Panc1 (cell line): ENCODE measurements at regions of chr1 and their contacts with region 1.

Region 1: GRCh38 chr1:85259118-85259911 is at the start of gene C1orf52:
- DNase-seq: peak; percentile 78
- ATAC-seq: peak; percentile 93
- H3K4me3 ChIP-seq: peak within 1 kb of the TSS; percentile 69 to 83
- H3K27ac ChIP-seq: peak within 1 kb of the TSS; percentile 86
- H3K4me1 ChIP-seq: peaks cover 21% of the 10 kb centered on the region
- H3K27me3 ChIP-seq: no peaks in the 10 kb centered on the region
- CTCF ChIP-seq: peak; percentile 100
- total RNA-seq, gene C1orf52: 51.6 TPM

Region 2: GRCh38 chr1:84944767-84945486 is 314.4 kb before region 1 on chr1:
- CTCF ChIA-PET with region 1: interaction called, 36 read pairs
- POLR2A ChIA-PET with region 1: interaction called, 3 read pairs
- in situ Hi-C with region 1: no loop called
- intact Hi-C with region 1: loop called (anchors 1 kb)
- DNase-seq: peak; percentile 94
- ATAC-seq: peak; percentile 96
- H3K4me3 ChIP-seq: peak overlapping the region; percentile 24 to 34
- H3K27ac ChIP-seq: peak overlapping the region; percentile 74
- H3K4me1 ChIP-seq: no peaks in the 10 kb centered on the region
- H3K27me3 ChIP-seq: no peaks in the 10 kb centered on the region
- CTCF ChIP-seq: peak; percentile 100

Region 3: DNA sequence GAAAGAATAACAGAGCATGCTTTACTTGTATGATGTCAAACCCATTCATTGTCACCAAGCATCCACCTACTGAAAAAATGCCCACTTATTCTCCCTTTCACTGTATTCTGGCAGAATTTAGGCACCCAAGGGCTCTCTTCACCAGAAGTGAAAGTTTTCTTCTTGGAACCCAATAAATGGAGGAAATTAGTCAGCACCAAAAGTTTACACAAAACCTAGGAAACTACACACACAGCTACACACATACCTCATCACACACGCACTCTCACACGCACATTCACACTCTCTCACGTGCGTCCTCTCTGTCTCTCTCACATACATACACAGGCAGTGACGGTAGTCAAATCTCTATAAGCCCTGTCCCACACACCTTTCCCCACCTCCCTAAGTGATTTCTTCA is 300.0 kb before region 1 on chr1:
- CTCF ChIA-PET with region 1: interaction called, 3 read pairs
- POLR2A ChIA-PET with region 1: interaction called, 10 read pairs
- in situ Hi-C with region 1: no loop called
- intact Hi-C with region 1: no loop called
- DNase-seq: no peak
- ATAC-seq: no peak
- H3K4me3 ChIP-seq: no peak overlapping the region
- H3K27ac ChIP-seq: no peak overlapping the region
- H3K4me1 ChIP-seq: no peaks in the 10 kb centered on the region
- H3K27me3 ChIP-seq: no peaks in the 10 kb centered on the region
- CTCF ChIP-seq: no peak

Region 4: DNA sequence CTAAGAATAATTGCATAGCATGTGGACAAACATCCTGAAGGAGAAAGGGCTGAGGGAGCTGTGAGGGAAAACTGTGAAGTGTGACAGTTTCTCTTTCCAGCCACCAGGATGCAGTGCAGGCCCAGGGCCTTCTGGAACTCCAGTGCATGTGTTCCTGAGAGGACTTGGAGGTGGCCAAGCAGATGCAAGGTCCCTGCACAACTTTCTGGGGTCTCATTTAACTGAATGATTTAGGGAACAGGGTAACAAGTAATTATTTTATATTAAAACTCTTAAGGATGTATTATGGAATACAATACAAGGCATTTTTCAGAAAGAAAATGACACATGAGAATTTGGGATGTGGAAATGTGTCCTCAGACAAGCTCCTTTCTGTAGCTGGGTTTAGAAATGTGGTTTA is 149.8 kb before region 1 on chr1:
- CTCF ChIA-PET with region 1: interaction called, 32 read pairs
- POLR2A ChIA-PET with region 1: no interaction called
- in situ Hi-C with region 1: no loop called
- intact Hi-C with region 1: loop called (anchors 1 kb)
- DNase-seq: peak; percentile 60
- ATAC-seq: peak; percentile 100
- H3K4me3 ChIP-seq: no peak overlapping the region
- H3K27ac ChIP-seq: no peak overlapping the region
- H3K4me1 ChIP-seq: no peaks in the 10 kb centered on the region
- H3K27me3 ChIP-seq: peaks cover 5% of the 10 kb centered on the region; the same call in 1 of the 2 replicates
- CTCF ChIP-seq: peak; percentile 100

Region 5: GRCh38 chr1:85200870-85201339 is 58.4 kb before region 1 on chr1 and contains the start of gene SYDE2:
- CTCF ChIA-PET with region 1: interaction called, 5 read pairs
- POLR2A ChIA-PET with region 1: interaction called, 4 read pairs
- in situ Hi-C with region 1: no loop called
- intact Hi-C with region 1: loop called (anchors 2 kb)
- DNase-seq: no peak
- ATAC-seq: peak; percentile 93
- H3K4me3 ChIP-seq: peak within 1 kb of the TSS; percentile 78 to 81
- H3K27ac ChIP-seq: peak within 1 kb of the TSS; percentile 90
- H3K4me1 ChIP-seq: peaks cover 59% of the 10 kb centered on the region
- H3K27me3 ChIP-seq: no peaks in the 10 kb centered on the region
- CTCF ChIP-seq: no peak; the same call in 1 of the 2 replicates
- total RNA-seq, gene SYDE2: 18.2 TPM

Region 6: GRCh38 chr1:85276215-85276977 is 17.1 kb after region 1 on chr1 and contains the start of gene BCL10:
- CTCF ChIA-PET with region 1: interaction called, 17 read pairs
- POLR2A ChIA-PET with region 1: interaction called, 11 read pairs
- in situ Hi-C with region 1: no loop called
- intact Hi-C with region 1: no loop called
- DNase-seq: peak; percentile 100
- ATAC-seq: peak; percentile 96
- H3K4me3 ChIP-seq: peak within 1 kb of the TSS; percentile 83 to 88
- H3K27ac ChIP-seq: peak within 1 kb of the TSS; percentile 97
- H3K4me1 ChIP-seq: peaks cover 52% of the 10 kb centered on the region
- H3K27me3 ChIP-seq: no peaks in the 10 kb centered on the region
- CTCF ChIP-seq: no peak
- total RNA-seq, gene BCL10: 69.9 TPM